AG04450 (cell line): ENCODE measurements at regions of chr15 and their contacts with region 1.

Region 1: GRCh38 chr15:68924866-68925560 is 5.3 kb upstream of the SPESP1 start:
- DNase-seq: peak; percentile 29
- H3K4me3 ChIP-seq: no peak overlapping the region
- H3K27ac ChIP-seq: no peak overlapping the region
- H3K27me3 ChIP-seq: peaks cover 9% of the 10 kb centered on the region
- CTCF ChIP-seq: peak; percentile 94

Region 2: GRCh38 chr15:68559345-68560310 is 365.4 kb before region 1 on chr15:
- CTCF ChIA-PET with region 1: interaction called, 14 read pairs
- POLR2A ChIA-PET with region 1: no interaction called
- DNase-seq: peak; percentile 37
- H3K4me3 ChIP-seq: peak overlapping the region; percentile 65
- H3K27ac ChIP-seq: no peak overlapping the region
- H3K27me3 ChIP-seq: peaks cover 8% of the 10 kb centered on the region
- CTCF ChIP-seq: peak; percentile 89

Region 3: DNA sequence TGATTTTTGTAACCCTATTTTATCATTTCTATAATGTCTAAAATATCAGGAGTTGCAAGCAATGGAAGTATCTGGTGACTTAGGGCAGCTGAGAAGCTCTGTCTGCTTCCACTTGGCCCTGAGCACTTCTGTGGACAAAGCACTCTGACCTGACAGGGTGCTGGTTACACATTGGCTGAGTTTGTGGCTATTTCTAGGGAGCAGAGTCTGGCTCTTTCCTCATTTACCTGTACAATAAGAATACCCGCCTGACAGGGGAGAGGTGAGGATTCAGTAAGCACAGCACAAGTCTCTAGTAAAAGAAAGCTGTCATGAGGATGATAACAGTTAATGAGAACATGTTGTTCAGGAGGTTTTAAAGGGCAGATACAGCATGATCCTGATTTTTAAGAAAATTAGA is 28.0 kb before region 1 on chr15:
- CTCF ChIA-PET with region 1: interaction called, 10 read pairs
- POLR2A ChIA-PET with region 1: no interaction called
- DNase-seq: no peak
- H3K4me3 ChIP-seq: no peak overlapping the region
- H3K27ac ChIP-seq: no peak overlapping the region
- H3K27me3 ChIP-seq: peaks cover 23% of the 10 kb centered on the region
- CTCF ChIP-seq: no peak

Region 4: DNA sequence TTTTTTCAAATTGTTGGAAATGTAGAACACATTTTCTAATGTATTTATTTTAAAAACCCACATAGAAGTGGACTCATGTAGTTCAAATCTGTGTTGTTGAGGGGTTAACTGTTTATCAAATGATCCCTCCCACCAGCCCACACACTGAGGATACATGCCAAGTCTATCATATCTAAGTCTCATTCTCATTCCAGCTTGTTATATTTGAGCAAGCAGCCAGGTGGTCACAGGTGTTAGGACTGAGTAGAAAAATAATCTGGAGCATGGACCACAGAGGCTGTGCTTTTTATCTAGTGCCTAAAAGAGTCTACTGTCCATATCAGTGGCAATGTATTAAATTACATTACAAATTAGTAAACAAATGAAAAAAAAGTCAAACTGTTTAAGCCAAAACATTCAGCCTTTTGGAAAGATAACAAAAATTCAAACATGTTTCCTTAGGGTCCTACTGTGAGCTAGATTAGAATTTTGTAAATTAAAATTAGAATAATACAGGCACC is 15.4 kb before region 1 on chr15:
- CTCF ChIA-PET with region 1: interaction called, 19 read pairs
- POLR2A ChIA-PET with region 1: no interaction called
- DNase-seq: no peak
- H3K4me3 ChIP-seq: no peak overlapping the region
- H3K27ac ChIP-seq: no peak overlapping the region
- H3K27me3 ChIP-seq: peaks cover 18% of the 10 kb centered on the region
- CTCF ChIP-seq: no peak